Mammary epithelial cell (primary cell): ENCODE measurements at regions of chr1 and their contacts with region 1.

Region 1: DNA sequence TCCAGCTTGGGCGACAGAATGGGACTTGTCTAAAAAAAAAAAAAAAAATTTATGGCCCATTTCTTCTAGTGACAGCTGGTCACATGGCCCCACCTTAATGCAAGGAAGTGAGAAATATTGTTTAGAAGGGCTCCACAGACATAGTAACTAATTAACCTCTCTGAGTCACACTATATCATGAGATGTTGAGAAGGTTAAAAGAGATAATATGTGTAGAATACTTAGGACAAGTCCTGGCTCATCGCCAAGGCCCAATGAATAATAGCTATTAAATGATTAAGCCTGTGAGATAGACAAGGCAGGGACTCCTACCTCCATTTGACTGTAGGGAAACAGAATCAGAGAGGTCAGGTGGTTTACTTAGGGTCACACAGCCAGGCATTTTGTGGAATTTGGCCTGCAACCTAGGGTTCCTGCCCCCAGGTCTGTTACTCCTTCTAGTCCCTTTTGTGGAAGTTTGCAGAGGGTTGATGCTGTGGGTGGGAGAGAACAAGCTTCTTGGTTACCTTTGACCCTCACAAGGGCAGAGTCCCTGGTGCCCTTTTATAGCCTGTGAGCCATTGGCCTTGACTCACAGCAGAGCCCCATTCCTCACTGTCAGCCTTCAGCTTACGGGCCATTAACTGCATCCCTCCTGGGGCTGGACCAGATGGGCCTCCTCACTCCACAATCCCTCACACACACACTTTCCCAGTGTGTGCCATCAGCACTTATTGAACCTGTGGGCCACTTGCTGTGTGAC is 48.5 kb downstream of the OPRD1 start:
- DNase-seq: peak; percentile 71
- H3K4me3 ChIP-seq: no peak overlapping the region
- H3K27ac ChIP-seq: no peak overlapping the region
- H3K4me1 ChIP-seq: no peaks in the 10 kb centered on the region
- H3K27me3 ChIP-seq: peaks cover 1% of the 10 kb centered on the region
- CTCF ChIP-seq: no peak

Region 2: GRCh38 chr1:28815533-28816185 is 44.8 kb before region 1 on chr1:
- CTCF ChIA-PET with region 1: no interaction called
- dilution Hi-C with region 1: loop called (anchors 5 kb)
- in situ Hi-C with region 1: no loop called
- intact Hi-C with region 1: no loop called
- DNase-seq: no peak
- H3K4me3 ChIP-seq: no peak overlapping the region
- H3K27ac ChIP-seq: no peak overlapping the region
- H3K4me1 ChIP-seq: peaks cover 4% of the 10 kb centered on the region
- H3K27me3 ChIP-seq: peaks cover 21% of the 10 kb centered on the region
- CTCF ChIP-seq: no peak

Region 3: GRCh38 chr1:28905921-28906666 is 45.6 kb after region 1 on chr1:
- CTCF ChIA-PET with region 1: no interaction called
- dilution Hi-C with region 1: no loop called
- in situ Hi-C with region 1: no loop called
- intact Hi-C with region 1: no loop called
- DNase-seq: no peak
- H3K4me3 ChIP-seq: no peak overlapping the region
- H3K27ac ChIP-seq: no peak overlapping the region
- H3K4me1 ChIP-seq: no peaks in the 10 kb centered on the region
- H3K27me3 ChIP-seq: no peaks in the 10 kb centered on the region
- CTCF ChIP-seq: no peak

Region 4: GRCh38 chr1:29209173-29209572 is 348.7 kb after region 1 on chr1:
- CTCF ChIA-PET with region 1: no interaction called
- dilution Hi-C with region 1: loop called (anchors 5 kb)
- in situ Hi-C with region 1: no loop called
- intact Hi-C with region 1: no loop called
- DNase-seq: no peak
- H3K4me3 ChIP-seq: no peak overlapping the region
- H3K27ac ChIP-seq: no peak overlapping the region
- H3K4me1 ChIP-seq: no peaks in the 10 kb centered on the region
- H3K27me3 ChIP-seq: no peaks in the 10 kb centered on the region
- CTCF ChIP-seq: no peak